ENCODE measurements at regions of chr2 and their contacts with region 1.

Region 1: GRCh38 chr2:231706731-231707624 is 1.3 kb upstream of the PTMA start:
- DNase-seq: peak; percentile 97 to 98 (median 98)
- H3K4me3 ChIP-seq: peak overlapping the region; percentile 90 to 96
- H3K4me3 Mint-ChIP-seq: peak overlapping the region; percentile 95 to 98 (median 97)
- H3K27ac ChIP-seq: peak overlapping the region; percentile 100
- H3K27ac Mint-ChIP-seq: peak overlapping the region; percentile 100
- H3K4me1 ChIP-seq: peaks cover 28% of the 10 kb centered on the region
- H3K4me1 Mint-ChIP-seq: peaks cover 10 to 54% (median 18%) of the 10 kb centered on the region in 4 donors
- H3K27me3 ChIP-seq: no peaks in the 10 kb centered on the region
- H3K27me3 Mint-ChIP-seq: peaks cover 0 to 6% of the 10 kb centered on the region in 2 donors

Region 2: GRCh38 chr2:231463698-231464575 is 243.0 kb before region 1 on chr2 and contains the start of gene NCL:
- CTCF ChIA-PET with region 1: no interaction called
- POLR2A ChIA-PET with region 1: interaction called, 52 read pairs
- intact Hi-C with region 1: loop called (anchors 1 kb)
- DNase-seq: peak; percentile 90 to 96 (median 92)
- H3K4me3 ChIP-seq: peak within 1 kb of the TSS; percentile 77 to 92
- H3K4me3 Mint-ChIP-seq: peak within 1 kb of the TSS; percentile 92 to 98 (median 96)
- H3K27ac ChIP-seq: peak within 1 kb of the TSS; percentile 96
- H3K27ac Mint-ChIP-seq: peak within 1 kb of the TSS; percentile 99 to 100 (median 99)
- H3K4me1 ChIP-seq: peaks cover 51% of the 10 kb centered on the region
- H3K4me1 Mint-ChIP-seq: peaks cover 31 to 59% (median 45%) of the 10 kb centered on the region in 4 donors
- H3K27me3 ChIP-seq: no peaks in the 10 kb centered on the region
- H3K27me3 Mint-ChIP-seq: peaks cover 0 to 3% of the 10 kb centered on the region in 2 donors
- total RNA-seq, gene NCL: 380 to 390 TPM

Region 3: DNA sequence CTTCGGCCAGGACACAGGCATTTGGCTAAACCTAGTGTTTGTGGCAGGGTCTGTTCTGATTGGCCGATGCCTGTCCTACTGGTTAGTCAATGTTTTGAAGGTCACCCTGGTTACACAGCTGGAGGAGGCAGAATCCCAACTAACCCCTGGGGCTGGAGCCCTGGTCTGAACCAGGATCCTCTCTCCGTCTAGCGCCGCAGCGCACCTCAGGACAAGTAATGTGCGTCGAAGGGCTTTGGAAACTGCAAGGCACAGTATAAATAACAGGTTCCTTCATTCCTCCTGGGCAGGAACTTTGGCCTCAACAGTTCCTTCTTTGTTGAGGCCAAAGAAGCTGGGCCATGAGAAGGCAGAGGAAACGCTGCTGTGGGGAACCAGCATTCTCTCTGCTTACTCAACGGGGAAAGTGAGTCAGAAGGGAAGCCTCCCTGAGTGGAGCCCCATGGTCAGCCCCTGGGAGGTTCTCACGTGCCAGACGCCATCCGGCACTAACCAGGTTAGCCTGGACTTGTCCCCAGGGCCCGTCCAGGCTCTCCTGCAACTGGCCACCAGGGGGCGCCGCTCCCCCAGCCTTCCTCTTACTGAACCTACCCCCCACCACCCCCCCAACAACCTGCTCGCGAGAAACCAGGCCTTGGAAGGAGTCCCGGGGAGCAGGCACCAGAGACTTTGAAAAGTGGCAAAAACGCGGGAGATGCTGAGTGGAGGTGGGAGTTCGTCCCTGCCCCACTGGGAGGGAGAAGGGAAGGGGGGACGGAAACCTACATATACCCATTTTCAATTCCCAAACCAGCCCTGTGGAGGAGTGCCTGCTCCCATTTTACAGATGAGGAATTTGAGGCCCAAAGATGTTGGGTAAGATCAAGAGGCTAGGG is 94.6 kb before region 1 on chr2:
- CTCF ChIA-PET with region 1: interaction called, 155 read pairs
- POLR2A ChIA-PET with region 1: interaction called, 116 read pairs
- intact Hi-C with region 1: no loop called
- DNase-seq: peak; percentile 81 to 88 (median 83)
- H3K4me3 ChIP-seq: peak overlapping the region in 1 of 2 donors; percentile 62
- H3K4me3 Mint-ChIP-seq: peak overlapping the region; percentile 71 to 96 (median 87)
- H3K27ac ChIP-seq: peak overlapping the region; percentile 65
- H3K27ac Mint-ChIP-seq: peak overlapping the region; percentile 88 to 96 (median 93)
- H3K4me1 ChIP-seq: peaks cover 23% of the 10 kb centered on the region
- H3K4me1 Mint-ChIP-seq: peaks cover 18 to 41% (median 28%) of the 10 kb centered on the region in 4 donors
- H3K27me3 ChIP-seq: no peaks in the 10 kb centered on the region
- H3K27me3 Mint-ChIP-seq: no peaks in the 10 kb centered on the region

Region 4: DNA sequence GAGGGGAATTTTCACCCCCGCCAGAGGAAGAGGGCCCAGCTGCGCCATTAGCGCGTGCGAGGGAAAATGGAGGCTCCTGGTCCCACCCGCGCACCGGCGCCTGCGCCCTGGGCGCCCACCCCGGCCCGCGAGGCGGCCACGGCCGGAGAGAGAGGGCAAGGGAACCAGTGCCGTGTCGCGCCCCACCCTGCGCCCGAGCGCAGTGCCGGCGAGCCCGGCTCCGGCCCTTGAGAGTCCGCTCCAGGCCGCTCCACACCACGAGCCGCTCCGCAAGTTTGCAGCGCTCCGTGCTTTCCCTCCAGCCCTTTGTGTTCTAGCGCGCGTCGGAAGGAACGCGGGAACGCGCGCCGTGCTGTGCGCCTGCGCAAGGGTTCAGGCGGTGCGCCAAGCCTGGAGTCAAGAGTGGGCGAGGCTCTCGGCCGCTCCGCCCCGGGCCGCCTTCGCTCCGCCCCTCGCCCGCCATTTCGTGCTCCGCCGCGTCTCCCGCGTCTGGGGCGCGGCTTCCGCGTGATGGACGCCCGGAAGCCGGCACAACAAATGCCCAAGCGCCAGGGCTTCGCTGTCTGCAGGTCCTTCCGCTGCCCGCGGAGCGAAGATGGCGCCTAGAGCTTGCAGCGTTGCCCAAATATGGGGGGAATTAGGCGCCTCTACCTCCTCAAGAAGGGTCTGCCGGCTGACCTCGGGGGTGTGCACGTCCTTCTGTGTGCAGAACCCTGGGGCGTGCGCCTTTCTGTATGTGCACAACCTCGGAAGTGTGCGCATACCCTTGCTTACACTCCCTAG is 44.8 kb before region 1 on chr2:
- CTCF ChIA-PET with region 1: interaction called, 65 read pairs
- POLR2A ChIA-PET with region 1: interaction called, 265 read pairs
- intact Hi-C with region 1: loop called (anchors 1 kb)
- DNase-seq: peak; percentile 93 to 99 (median 99)
- H3K4me3 ChIP-seq: peak overlapping the region; percentile 43 to 60
- H3K4me3 Mint-ChIP-seq: peak overlapping the region; percentile 75 to 86 (median 80)
- H3K27ac ChIP-seq: peak overlapping the region; percentile 86
- H3K27ac Mint-ChIP-seq: peak overlapping the region; percentile 90 to 99 (median 97)
- H3K4me1 ChIP-seq: peaks cover 14% of the 10 kb centered on the region
- H3K4me1 Mint-ChIP-seq: peaks cover 5 to 23% (median 13%) of the 10 kb centered on the region in 4 donors
- H3K27me3 ChIP-seq: no peaks in the 10 kb centered on the region
- H3K27me3 Mint-ChIP-seq: no peaks in the 10 kb centered on the region

Region 5: GRCh38 chr2:231687133-231687852 is 19.7 kb before region 1 on chr2:
- CTCF ChIA-PET with region 1: interaction called, 742 read pairs
- POLR2A ChIA-PET with region 1: interaction called, 50 read pairs
- intact Hi-C with region 1: no loop called
- DNase-seq: peak in 4 of 5 donors; percentile 50 to 62 (median 55)
- H3K4me3 ChIP-seq: no peak overlapping the region
- H3K4me3 Mint-ChIP-seq: peak overlapping the region in 1 of 8 donors; percentile 29
- H3K27ac ChIP-seq: no peak overlapping the region
- H3K27ac Mint-ChIP-seq: peak overlapping the region in 5 of 7 donors; percentile 0 to 57 (median 36)
- H3K4me1 ChIP-seq: no peaks in the 10 kb centered on the region
- H3K4me1 Mint-ChIP-seq: peaks cover 0 to 6% (median 3%) of the 10 kb centered on the region in 4 donors
- H3K27me3 ChIP-seq: peaks cover 3% of the 10 kb centered on the region
- H3K27me3 Mint-ChIP-seq: peaks cover 3 to 5% of the 10 kb centered on the region in 2 donors

Region 6: DNA sequence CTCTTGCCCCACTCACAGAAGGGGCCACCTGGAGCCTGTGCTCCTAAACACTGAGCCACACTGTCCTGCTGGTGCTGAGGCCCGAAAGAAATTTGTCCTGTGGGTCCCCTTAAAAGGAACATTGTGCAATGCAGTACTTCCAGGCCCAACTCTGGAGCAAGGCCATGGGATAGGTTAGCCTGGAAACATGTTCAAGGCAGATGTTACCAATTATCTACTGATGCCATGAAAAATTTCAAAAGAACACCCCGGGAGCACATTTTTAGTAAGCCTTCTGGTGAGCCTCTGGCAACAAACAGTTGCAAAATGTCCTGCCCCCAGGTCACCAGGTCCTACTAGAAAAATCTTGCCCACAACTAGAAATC is 11.0 kb before region 1 on chr2:
- CTCF ChIA-PET with region 1: interaction called, 742 read pairs
- POLR2A ChIA-PET with region 1: interaction called, 25 read pairs
- intact Hi-C with region 1: no loop called
- DNase-seq: no peak
- H3K4me3 ChIP-seq: no peak overlapping the region
- H3K4me3 Mint-ChIP-seq: no peak overlapping the region
- H3K27ac ChIP-seq: no peak overlapping the region
- H3K27ac Mint-ChIP-seq: no peak overlapping the region
- H3K4me1 ChIP-seq: no peaks in the 10 kb centered on the region
- H3K4me1 Mint-ChIP-seq: no peaks in the 10 kb centered on the region
- H3K27me3 ChIP-seq: no peaks in the 10 kb centered on the region
- H3K27me3 Mint-ChIP-seq: no peaks in the 10 kb centered on the region